Activated CD4-positive, alpha-beta memory T cell treated with anti-CD3 and anti-CD28 coated beads for 36 hours (primary cell): ENCODE measurements at regions of chr2 and their contacts with region 1.

Region 1: GRCh38 chr2:42220566-42220965 is 51.4 kb downstream of the EML4 start:
- DNase-seq: no peak
- H3K4me3 Mint-ChIP-seq: no peak overlapping the region
- H3K27ac Mint-ChIP-seq: no peak overlapping the region
- H3K4me1 Mint-ChIP-seq: peaks cover 70% of the 10 kb centered on the region
- H3K27me3 Mint-ChIP-seq: no peaks in the 10 kb centered on the region

Region 2: DNA sequence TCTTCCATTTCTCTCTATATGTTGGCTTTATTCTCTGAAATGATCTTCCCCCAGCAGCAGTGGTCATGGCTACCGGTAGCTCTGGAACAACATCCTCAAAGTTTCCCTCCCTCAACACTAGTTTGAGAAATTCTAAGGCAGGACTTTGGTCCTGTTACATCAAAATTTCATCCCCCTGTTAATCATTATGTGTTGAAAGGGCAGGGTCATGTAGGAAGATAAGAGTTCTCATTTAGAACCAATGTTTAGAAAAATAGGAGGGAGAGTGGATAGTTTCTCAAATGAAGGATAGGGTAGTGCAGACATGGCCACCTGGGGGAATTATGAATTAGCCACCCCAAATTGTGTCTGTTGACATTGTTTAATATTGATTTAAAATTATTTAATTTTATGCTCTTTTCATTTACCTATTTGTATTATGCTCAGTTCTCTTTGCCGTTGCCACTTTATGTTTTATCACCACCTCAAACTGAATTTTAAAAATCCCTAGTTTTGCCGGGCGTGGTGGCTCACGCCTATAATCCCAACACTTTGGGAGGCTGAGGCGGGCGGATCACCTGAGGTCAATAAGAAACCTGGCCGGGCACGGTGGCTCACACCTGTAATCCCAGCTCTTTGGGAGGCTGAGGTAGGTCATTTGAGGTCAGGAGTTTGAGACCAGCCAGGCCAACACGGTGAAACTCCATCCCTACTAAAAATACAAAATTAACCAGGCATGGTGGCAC is 29.1 kb before region 1 on chr2:
- CTCF ChIA-PET with region 1: no interaction called
- POLR2A ChIA-PET with region 1: no interaction called
- intact Hi-C with region 1: no loop called
- DNase-seq: no peak
- H3K4me3 Mint-ChIP-seq: no peak overlapping the region
- H3K27ac Mint-ChIP-seq: peak overlapping the region; percentile 58
- H3K4me1 Mint-ChIP-seq: peaks cover 73% of the 10 kb centered on the region
- H3K27me3 Mint-ChIP-seq: no peaks in the 10 kb centered on the region

Region 3: GRCh38 chr2:42230891-42231290 is 10.3 kb after region 1 on chr2:
- CTCF ChIA-PET with region 1: interaction called, 3 read pairs
- POLR2A ChIA-PET with region 1: interaction called, 3 read pairs
- intact Hi-C with region 1: loop called (anchors 1 kb)
- DNase-seq: no peak
- H3K4me3 Mint-ChIP-seq: no peak overlapping the region
- H3K27ac Mint-ChIP-seq: no peak overlapping the region
- H3K4me1 Mint-ChIP-seq: peaks cover 66% of the 10 kb centered on the region
- H3K27me3 Mint-ChIP-seq: no peaks in the 10 kb centered on the region